Activated CD4-positive, alpha-beta memory T cell treated with anti-CD3 and anti-CD28 coated beads for 36 hours (primary cell): ENCODE measurements at regions of chr16 and their contacts with region 1.

Region 1: DNA sequence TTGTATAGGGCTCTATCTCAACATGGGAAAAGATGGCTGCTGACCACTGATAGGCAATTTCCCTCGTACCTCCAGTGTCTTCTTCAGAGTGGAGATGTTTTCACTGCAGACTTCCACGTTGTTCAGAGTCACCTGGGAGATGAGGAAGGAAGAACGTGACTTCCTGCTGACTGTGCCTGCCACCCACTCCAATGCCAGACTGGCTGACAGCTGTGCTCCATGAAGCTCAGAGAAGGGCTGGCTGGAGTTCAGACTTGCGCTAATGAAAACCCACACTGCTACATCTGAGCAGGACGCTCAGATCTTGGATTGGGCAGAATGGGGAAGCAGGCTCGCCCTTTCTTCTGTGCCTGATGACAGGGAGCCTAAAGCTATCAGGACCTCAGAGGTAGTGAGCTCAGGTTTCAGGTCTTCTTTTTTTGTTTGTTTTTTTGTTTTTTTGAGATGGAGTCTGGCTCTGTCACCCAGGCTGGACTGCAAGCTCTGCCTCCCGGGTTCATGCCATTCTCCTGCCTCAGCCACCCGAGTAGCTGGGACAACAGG is 33.0 kb downstream of the COG4 start:
- DNase-seq: no peak
- H3K4me3 Mint-ChIP-seq: no peak overlapping the region
- H3K27ac Mint-ChIP-seq: no peak overlapping the region
- H3K4me1 Mint-ChIP-seq: peaks cover 16% of the 10 kb centered on the region
- H3K27me3 Mint-ChIP-seq: no peaks in the 10 kb centered on the region

Region 2: DNA sequence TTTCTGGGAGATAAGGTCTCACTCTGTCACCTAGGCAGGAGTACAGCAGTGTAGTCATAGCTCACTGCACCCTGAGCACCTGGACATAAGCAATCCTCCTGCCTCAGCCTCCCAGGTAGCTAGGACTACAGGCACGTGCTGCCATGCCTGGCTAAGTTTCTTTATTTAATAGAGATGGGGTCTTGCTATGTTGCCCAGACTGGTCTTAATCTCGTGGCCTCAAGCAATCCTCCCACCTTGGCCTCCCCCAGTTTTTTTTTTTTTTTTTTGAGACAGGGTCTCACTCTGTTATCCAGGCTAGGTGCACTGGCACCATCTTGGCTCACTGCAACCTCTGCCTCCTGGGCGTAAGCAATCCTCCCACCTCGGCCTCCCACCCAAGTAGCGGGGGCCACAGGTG is 170.2 kb before region 1 on chr16:
- CTCF ChIA-PET with region 1: no interaction called
- POLR2A ChIA-PET with region 1: no interaction called
- intact Hi-C with region 1: no loop called
- DNase-seq: no peak
- H3K4me3 Mint-ChIP-seq: no peak overlapping the region
- H3K27ac Mint-ChIP-seq: no peak overlapping the region
- H3K4me1 Mint-ChIP-seq: no peaks in the 10 kb centered on the region
- H3K27me3 Mint-ChIP-seq: no peaks in the 10 kb centered on the region

Region 3: DNA sequence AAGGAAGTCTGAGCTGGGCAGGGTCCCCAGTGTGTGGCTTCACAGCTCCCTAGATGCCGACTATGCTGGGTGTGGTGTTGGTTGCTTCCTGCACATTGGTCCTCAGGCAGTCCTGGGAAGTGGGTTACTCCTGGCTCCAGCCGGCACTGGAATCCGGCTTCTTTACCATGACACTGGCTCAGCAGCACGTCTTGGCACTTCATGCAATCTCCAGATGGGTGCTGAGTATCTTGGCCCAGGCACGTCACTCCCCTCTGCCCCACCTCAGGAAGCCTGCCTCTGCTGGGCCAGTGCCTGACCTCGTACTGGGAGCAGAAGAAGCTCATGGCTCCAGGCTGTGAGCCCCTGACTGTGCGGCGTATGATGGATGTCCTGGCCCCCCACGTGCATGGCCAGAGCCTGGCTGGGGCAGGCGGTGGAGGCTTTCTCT is 11.4 kb before region 1 on chr16:
- CTCF ChIA-PET with region 1: no interaction called
- POLR2A ChIA-PET with region 1: interaction called, 12 read pairs
- intact Hi-C with region 1: loop called (anchors 1 kb)
- DNase-seq: no peak
- H3K4me3 Mint-ChIP-seq: no peak overlapping the region
- H3K27ac Mint-ChIP-seq: peak overlapping the region; percentile 28
- H3K4me1 Mint-ChIP-seq: peaks cover 25% of the 10 kb centered on the region
- H3K27me3 Mint-ChIP-seq: no peaks in the 10 kb centered on the region

Region 4: GRCh38 chr16:70646260-70647241 is 156.2 kb after region 1 on chr16 and contains the start of gene IL34:
- CTCF ChIA-PET with region 1: no interaction called
- POLR2A ChIA-PET with region 1: no interaction called
- intact Hi-C with region 1: loop called (anchors 10 kb)
- DNase-seq: no peak
- H3K4me3 Mint-ChIP-seq: no peak within 1 kb of the TSS
- H3K27ac Mint-ChIP-seq: no peak within 1 kb of the TSS
- H3K4me1 Mint-ChIP-seq: no peaks in the 10 kb centered on the region
- H3K27me3 Mint-ChIP-seq: peaks cover 4% of the 10 kb centered on the region
- total RNA-seq, gene IL34: not detected